Activated CD4-positive, alpha-beta T cell treated with anti-CD3 and anti-CD28 coated beads for 36 hours (primary cell): ENCODE measurements at regions of chr12 and their contacts with region 1.

Region 1: GRCh38 chr12:124940549-124941527 is 26.4 kb upstream of the UBC start:
- DNase-seq: peak; percentile 95
- ATAC-seq: peak; percentile 39
- H3K4me3 Mint-ChIP-seq: no peak overlapping the region
- H3K27ac Mint-ChIP-seq: no peak overlapping the region
- H3K4me1 Mint-ChIP-seq: peaks cover 11% of the 10 kb centered on the region
- H3K27me3 Mint-ChIP-seq: no peaks in the 10 kb centered on the region

Region 2: GRCh38 chr12:124927201-124928094 is 13.4 kb before region 1 on chr12:
- CTCF ChIA-PET with region 1: interaction called, 65 read pairs
- POLR2A ChIA-PET with region 1: interaction called, 8 read pairs
- intact Hi-C with region 1: loop called (anchors 1 kb)
- DNase-seq: peak; percentile 96
- ATAC-seq: peak; percentile 81
- H3K4me3 Mint-ChIP-seq: peak overlapping the region; percentile 98
- H3K27ac Mint-ChIP-seq: peak overlapping the region; percentile 97
- H3K4me1 Mint-ChIP-seq: peaks cover 33% of the 10 kb centered on the region
- H3K27me3 Mint-ChIP-seq: peaks cover 2% of the 10 kb centered on the region

Region 3: GRCh38 chr12:124970647-124971402 is 30.0 kb after region 1 on chr12:
- CTCF ChIA-PET with region 1: no interaction called
- POLR2A ChIA-PET with region 1: no interaction called
- intact Hi-C with region 1: no loop called
- DNase-seq: no peak
- ATAC-seq: no peak
- H3K4me3 Mint-ChIP-seq: no peak overlapping the region
- H3K27ac Mint-ChIP-seq: no peak overlapping the region
- H3K4me1 Mint-ChIP-seq: no peaks in the 10 kb centered on the region
- H3K27me3 Mint-ChIP-seq: no peaks in the 10 kb centered on the region

Region 4: GRCh38 chr12:125455556-125455955 is 514.7 kb after region 1 on chr12:
- CTCF ChIA-PET with region 1: no interaction called
- POLR2A ChIA-PET with region 1: no interaction called
- intact Hi-C with region 1: no loop called
- DNase-seq: no peak
- ATAC-seq: no peak
- H3K4me3 Mint-ChIP-seq: no peak overlapping the region
- H3K27ac Mint-ChIP-seq: no peak overlapping the region
- H3K4me1 Mint-ChIP-seq: no peaks in the 10 kb centered on the region
- H3K27me3 Mint-ChIP-seq: peaks cover 17% of the 10 kb centered on the region